ENCODE measurements at regions of chr18 and their contacts with region 1.

Region 1: DNA sequence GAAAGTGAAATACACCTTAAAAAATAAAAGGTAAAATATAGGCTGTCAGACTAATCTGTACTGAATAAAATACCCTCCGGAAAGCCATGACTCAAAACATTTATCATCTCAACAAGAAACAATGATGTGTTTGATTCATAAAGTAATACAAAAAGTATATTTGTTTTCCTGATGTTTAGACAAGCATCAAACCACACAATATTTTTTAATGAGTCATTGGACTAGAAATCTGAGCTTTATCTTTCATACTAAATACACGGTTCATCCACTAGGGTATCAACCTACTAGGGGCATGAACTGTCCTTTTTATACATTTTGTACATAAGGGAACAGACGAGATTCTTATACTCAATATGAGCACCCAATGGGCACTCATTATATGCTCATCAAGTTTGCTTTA is 31.3 kb downstream of the CD226 start:
- DNase-seq: no peak
- H3K4me3 ChIP-seq: no peak overlapping the region
- H3K4me3 Mint-ChIP-seq: peak overlapping the region in 2 of 8 donors; percentile 9 to 42
- H3K27ac ChIP-seq: no peak overlapping the region
- H3K27ac Mint-ChIP-seq: peak overlapping the region in 6 of 7 donors; percentile 16 to 69 (median 46)
- H3K4me1 ChIP-seq: peaks cover 63% of the 10 kb centered on the region
- H3K4me1 Mint-ChIP-seq: peaks cover 55 to 91% (median 73%) of the 10 kb centered on the region in 4 donors
- H3K27me3 ChIP-seq: no peaks in the 10 kb centered on the region
- H3K27me3 Mint-ChIP-seq: no peaks in the 10 kb centered on the region

Region 2: GRCh38 chr18:69787825-69788547 is 128.4 kb before region 1 on chr18:
- CTCF ChIA-PET with region 1: no interaction called
- POLR2A ChIA-PET with region 1: no interaction called
- intact Hi-C with region 1: no loop called
- DNase-seq: no peak
- H3K4me3 ChIP-seq: no peak overlapping the region
- H3K4me3 Mint-ChIP-seq: no peak overlapping the region
- H3K27ac ChIP-seq: no peak overlapping the region
- H3K27ac Mint-ChIP-seq: peak overlapping the region in 1 of 7 donors; percentile 5
- H3K4me1 ChIP-seq: no peaks in the 10 kb centered on the region
- H3K4me1 Mint-ChIP-seq: peaks cover 0 to 2% (median 0%) of the 10 kb centered on the region in 4 donors
- H3K27me3 ChIP-seq: no peaks in the 10 kb centered on the region
- H3K27me3 Mint-ChIP-seq: no peaks in the 10 kb centered on the region

Region 3: DNA sequence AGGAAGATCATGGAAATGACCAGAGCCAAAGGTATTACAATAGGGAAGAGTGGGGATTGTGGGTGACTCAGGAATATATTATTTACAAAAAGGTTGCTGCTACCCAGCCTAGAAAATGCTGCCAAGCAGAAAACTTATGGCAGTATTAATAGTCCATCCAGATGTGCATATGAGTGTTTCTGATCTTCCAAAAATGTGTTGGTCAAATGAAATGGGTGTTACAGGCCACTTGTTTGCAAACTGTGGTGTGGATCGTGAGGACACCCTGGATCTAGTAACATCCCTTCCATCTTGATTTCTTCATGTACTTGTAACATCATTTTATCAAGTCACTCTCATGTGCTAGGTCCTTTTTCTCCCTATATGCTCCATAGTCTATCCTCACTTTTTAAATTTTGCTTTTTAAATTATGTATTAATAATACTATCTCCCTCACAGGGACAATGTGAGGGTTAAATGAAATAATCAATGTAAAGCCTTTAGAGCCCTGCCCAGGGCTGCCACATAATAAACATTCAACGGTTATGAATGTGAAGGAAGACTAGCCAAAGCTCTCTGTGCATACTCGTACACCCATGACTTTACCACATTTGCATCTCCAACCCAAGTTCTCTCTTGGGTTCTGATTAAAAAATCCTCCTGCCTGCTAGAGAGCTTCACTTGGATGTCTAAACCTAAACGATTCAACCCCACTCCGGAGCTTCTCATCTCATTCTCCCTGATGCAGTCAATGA is 12.8 kb after region 1 on chr18:
- CTCF ChIA-PET with region 1: interaction called, 10 read pairs
- POLR2A ChIA-PET with region 1: interaction called, 3 read pairs
- intact Hi-C with region 1: loop called (anchors 2 kb)
- DNase-seq: no peak
- H3K4me3 ChIP-seq: no peak overlapping the region
- H3K4me3 Mint-ChIP-seq: peak overlapping the region in 2 of 8 donors; percentile 30 to 36
- H3K27ac ChIP-seq: no peak overlapping the region
- H3K27ac Mint-ChIP-seq: peak overlapping the region in 4 of 7 donors; percentile 13 to 24 (median 16)
- H3K4me1 ChIP-seq: peaks cover 59% of the 10 kb centered on the region
- H3K4me1 Mint-ChIP-seq: peaks cover 42 to 64% (median 54%) of the 10 kb centered on the region in 4 donors
- H3K27me3 ChIP-seq: no peaks in the 10 kb centered on the region
- H3K27me3 Mint-ChIP-seq: no peaks in the 10 kb centered on the region

Measured in CD4-positive, alpha-beta memory T cell (primary cell).